ENCODE measurements at regions of chr14 and their contacts with region 1.

Region 1: DNA sequence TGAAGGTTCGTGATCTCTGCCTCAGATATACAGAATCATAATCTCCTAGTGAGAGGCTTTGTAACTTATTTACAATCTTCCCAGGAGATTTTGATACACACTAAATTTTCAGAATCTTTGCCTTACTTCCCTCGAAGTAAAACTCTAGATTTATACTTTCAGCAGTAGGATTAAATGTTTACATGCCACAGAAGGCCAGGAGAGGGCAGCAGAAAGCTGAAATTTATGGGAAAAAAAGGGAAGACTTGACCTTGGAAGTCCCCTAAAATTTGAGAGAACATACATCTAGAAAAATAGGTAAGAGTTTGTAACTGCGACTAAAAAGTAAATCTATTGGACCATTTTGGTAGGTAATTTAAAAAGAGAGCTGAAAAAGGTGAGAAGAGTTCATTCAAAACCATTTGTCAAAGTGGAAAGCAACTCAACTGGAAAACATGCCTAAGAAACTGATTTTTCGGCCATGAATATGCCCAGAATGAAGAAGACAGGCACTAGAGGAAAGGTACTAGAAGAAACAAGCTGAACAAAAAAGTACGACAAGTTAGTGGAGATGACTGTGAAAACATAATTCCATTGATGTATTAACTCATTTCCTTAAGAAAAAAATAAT is 242.0 kb upstream of the MDGA2 start:
- DNase-seq: peak in 6 of 10 donors; percentile 14 to 43 (median 27)

Region 2: DNA sequence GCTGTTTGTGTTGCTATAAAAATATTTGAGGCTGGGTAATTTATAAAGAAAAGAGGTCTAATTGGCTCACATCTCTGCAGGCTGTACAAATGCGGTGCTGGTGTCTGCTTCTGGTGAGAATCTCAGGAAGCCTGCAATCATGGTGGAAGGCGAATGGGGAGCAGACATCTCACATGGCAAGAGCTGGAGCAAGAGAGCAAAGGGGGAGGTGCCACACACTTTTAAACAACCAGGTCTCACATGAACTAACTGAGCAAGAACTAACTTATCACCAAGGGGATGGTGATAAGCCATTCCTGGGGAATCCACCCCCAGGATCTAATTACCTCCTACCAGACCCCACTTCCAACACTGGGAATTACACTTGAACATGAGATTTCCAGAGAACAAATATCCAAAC is 58.7 kb after region 1 on chr14:
- intact Hi-C with region 1: no loop called
- DNase-seq: no peak

Region 3: DNA sequence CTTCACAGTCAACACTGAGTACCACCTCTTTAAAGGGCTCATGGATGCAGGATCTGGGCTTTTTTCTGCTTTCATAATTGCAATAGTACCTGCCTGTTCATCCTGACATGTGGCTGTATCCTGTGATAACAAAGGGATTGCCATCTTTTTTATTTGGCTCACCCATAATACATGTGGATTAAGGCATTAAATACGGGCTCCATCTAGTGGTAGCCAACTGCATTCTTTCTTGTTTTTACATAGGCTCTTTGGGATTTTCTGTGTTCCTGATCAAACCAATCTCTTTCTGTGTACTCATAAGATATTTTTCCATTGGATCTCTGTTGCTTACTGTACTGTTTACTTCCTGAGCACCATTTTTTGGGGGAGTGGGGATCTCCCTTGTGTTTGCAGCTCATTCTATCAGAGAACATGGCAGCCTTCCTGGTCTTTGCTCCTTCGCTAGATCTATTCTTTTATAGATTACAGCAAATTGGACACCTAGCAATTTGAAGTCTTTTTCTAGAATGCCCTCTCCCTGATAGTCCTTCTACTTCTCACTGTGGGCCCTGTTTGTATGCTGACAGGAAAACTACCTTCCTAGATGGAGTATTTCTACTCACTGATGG is 481.3 kb after region 1 on chr14:
- intact Hi-C with region 1: loop called (anchors 2 kb)
- DNase-seq: no peak

Region 4: DNA sequence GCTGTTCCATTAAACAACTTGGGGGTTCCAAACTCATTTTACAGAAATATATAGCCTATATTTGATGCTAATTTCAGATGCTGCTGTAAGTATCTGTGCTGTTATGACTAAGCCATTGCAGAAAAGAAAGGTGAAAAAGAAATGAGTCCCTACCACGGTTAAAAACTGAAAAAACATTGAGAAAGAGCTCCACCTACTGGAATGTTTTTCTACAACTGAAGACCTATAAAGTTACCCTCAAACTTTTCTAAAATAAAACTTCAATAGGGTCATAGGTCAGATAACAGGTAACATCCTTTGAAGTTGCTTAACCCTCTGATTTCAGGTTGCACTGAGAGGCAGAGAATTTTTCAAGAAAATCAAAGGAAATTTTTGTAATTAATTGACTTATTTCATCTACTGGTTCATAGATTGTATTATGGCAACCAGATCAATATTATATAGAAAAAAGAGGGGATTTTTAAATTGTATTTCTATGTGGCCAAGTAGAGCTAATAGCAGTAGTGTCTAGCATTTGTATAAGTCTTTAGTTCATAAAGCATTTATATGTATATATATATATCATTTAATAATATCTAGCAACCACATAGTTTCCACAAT is 1388.8 kb after region 1 on chr14:
- intact Hi-C with region 1: loop called (anchors 5 kb)
- DNase-seq: no peak

Region 5: GRCh38 chr14:49485290-49485689 is 1567.8 kb after region 1 on chr14:
- intact Hi-C with region 1: loop called (anchors 5 kb)
- DNase-seq: no peak